Activated CD8-positive, alpha-beta T cell treated with anti-CD3 and anti-CD28 coated beads for 36 hours (primary cell): ENCODE measurements at regions of chr16 and their contacts with region 1.

Region 1: DNA sequence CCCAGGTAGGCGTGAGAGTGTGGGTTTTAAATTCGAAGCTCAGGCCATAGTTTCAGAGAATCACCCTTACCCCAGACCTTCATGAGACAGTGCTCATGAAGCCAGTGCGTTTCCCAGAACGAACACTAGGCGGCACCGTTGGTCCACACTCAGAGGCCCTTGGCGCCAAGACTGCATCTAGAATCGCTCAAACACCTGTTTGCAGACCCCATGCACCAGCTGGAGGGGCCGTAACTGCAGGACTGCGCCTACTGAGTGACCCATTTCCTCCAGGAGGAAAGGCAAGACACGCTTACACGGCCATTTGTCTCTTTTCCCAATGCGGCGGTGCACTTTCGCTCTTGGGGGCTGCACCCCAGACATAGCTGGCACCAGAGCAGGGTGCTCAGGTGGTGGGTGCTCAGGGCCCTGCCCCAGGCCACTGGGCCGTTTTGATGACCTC is 34.0 kb downstream of the ADGRG5 start:
- DNase-seq: peak; percentile 95
- ATAC-seq: peak; percentile 66
- H3K4me3 Mint-ChIP-seq: no peak overlapping the region
- H3K27ac Mint-ChIP-seq: peak overlapping the region; percentile 88
- H3K4me1 Mint-ChIP-seq: peaks cover 48% of the 10 kb centered on the region
- H3K27me3 Mint-ChIP-seq: no peaks in the 10 kb centered on the region
- CTCF ChIP-seq: peak; percentile 98

Region 2: GRCh38 chr16:57452021-57452420 is 124.4 kb before region 1 on chr16:
- CTCF ChIA-PET with region 1: no interaction called
- POLR2A ChIA-PET with region 1: no interaction called
- intact Hi-C with region 1: no loop called
- DNase-seq: no peak
- ATAC-seq: no peak
- H3K4me3 Mint-ChIP-seq: no peak overlapping the region
- H3K27ac Mint-ChIP-seq: no peak overlapping the region
- H3K4me1 Mint-ChIP-seq: peaks cover 19% of the 10 kb centered on the region
- H3K27me3 Mint-ChIP-seq: no peaks in the 10 kb centered on the region
- CTCF ChIP-seq: no peak

Region 3: DNA sequence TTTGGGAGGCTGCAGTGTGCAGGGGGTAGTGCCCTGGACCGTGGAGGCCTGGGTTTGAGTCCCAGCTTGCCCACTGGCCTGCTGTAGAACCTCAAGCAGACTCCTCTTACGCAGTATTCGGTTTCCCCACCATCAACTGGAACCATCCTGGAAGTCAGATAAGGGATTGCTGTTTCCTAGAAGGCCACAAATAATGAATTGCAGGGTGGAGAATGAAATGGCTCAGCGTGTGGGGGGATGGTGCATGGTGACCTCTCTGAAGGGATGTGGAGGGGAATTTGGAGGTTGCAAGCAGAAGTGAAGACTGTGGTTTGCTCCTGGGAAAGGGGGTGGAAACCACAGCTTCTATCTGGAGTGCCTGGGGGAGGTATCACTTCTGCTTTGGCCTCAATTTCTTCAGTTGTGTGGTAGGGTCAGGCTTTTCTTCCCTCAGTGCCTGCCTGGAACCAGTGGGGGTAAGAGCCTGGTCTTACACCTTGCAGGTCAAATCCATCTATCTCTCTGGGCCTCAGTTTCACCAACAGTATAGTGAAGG is 32.3 kb before region 1 on chr16:
- CTCF ChIA-PET with region 1: interaction called, 22 read pairs
- POLR2A ChIA-PET with region 1: interaction called, 3 read pairs
- intact Hi-C with region 1: no loop called
- DNase-seq: peak; percentile 46
- ATAC-seq: peak; percentile 50
- H3K4me3 Mint-ChIP-seq: peak overlapping the region; percentile 66
- H3K27ac Mint-ChIP-seq: peak overlapping the region; percentile 13
- H3K4me1 Mint-ChIP-seq: peaks cover 57% of the 10 kb centered on the region
- H3K27me3 Mint-ChIP-seq: no peaks in the 10 kb centered on the region
- CTCF ChIP-seq: no peak

Region 4: GRCh38 chr16:57591086-57591869 is 14.8 kb after region 1 on chr16:
- CTCF ChIA-PET with region 1: interaction called, 180 read pairs
- POLR2A ChIA-PET with region 1: interaction called, 25 read pairs
- intact Hi-C with region 1: no loop called
- DNase-seq: peak; percentile 94
- ATAC-seq: peak; percentile 81
- H3K4me3 Mint-ChIP-seq: peak overlapping the region; percentile 77
- H3K27ac Mint-ChIP-seq: peak overlapping the region; percentile 98
- H3K4me1 Mint-ChIP-seq: peaks cover 49% of the 10 kb centered on the region
- H3K27me3 Mint-ChIP-seq: no peaks in the 10 kb centered on the region
- CTCF ChIP-seq: peak; percentile 94

Region 5: DNA sequence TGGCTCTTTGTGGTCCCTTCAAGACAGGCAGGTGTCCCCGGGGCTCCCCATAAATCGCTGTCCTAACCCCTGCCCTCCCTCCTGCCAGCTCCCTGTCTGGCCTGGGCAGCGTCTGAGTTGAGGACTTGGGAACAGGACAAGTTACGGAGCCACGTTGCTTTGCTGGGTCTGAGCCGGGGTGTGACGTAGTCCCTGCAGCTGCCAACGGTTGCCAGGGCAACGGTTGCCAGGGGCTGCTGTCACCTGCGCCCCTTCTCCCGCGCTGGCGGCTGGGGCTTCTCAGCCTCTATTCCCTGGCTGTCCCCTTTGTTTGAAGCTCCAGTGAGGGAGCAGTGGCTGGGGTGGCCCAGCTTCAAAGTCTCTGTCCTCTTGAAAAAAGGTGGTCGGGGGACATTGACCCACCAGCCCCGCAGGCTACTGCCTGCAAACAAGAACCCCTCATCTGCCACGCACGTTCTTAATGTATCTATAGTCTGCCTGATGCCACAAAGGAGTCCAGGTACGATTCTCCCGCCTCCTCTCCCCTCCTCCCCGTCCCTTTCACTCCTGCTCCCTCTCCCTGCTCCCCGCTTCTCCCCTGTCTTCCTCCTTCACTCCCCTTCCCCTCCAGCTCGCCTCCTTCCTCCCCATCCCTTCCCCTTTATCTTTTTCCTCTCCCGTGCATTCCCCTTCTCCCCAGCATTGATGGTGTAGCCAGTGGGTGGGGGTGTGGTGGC is 62.9 kb after region 1 on chr16:
- CTCF ChIA-PET with region 1: interaction called, 22 read pairs
- POLR2A ChIA-PET with region 1: interaction called, 4 read pairs
- intact Hi-C with region 1: no loop called
- DNase-seq: peak; percentile 42
- ATAC-seq: peak; percentile 40
- H3K4me3 Mint-ChIP-seq: no peak overlapping the region
- H3K27ac Mint-ChIP-seq: no peak overlapping the region
- H3K4me1 Mint-ChIP-seq: no peaks in the 10 kb centered on the region
- H3K27me3 Mint-ChIP-seq: no peaks in the 10 kb centered on the region
- CTCF ChIP-seq: no peak

Region 6: GRCh38 chr16:57672824-57673223 is 96.4 kb after region 1 on chr16:
- CTCF ChIA-PET with region 1: interaction called, 12 read pairs
- POLR2A ChIA-PET with region 1: no interaction called
- intact Hi-C with region 1: no loop called
- DNase-seq: no peak
- ATAC-seq: no peak
- H3K4me3 Mint-ChIP-seq: no peak overlapping the region
- H3K27ac Mint-ChIP-seq: no peak overlapping the region
- H3K4me1 Mint-ChIP-seq: no peaks in the 10 kb centered on the region
- H3K27me3 Mint-ChIP-seq: no peaks in the 10 kb centered on the region
- CTCF ChIP-seq: no peak

Region 7: GRCh38 chr16:57700781-57701551 is 124.5 kb after region 1 on chr16:
- CTCF ChIA-PET with region 1: no interaction called
- POLR2A ChIA-PET with region 1: no interaction called
- intact Hi-C with region 1: no loop called
- DNase-seq: no peak
- ATAC-seq: no peak
- H3K4me3 Mint-ChIP-seq: no peak overlapping the region
- H3K27ac Mint-ChIP-seq: no peak overlapping the region
- H3K4me1 Mint-ChIP-seq: no peaks in the 10 kb centered on the region
- H3K27me3 Mint-ChIP-seq: no peaks in the 10 kb centered on the region
- CTCF ChIP-seq: no peak

Region 8: DNA sequence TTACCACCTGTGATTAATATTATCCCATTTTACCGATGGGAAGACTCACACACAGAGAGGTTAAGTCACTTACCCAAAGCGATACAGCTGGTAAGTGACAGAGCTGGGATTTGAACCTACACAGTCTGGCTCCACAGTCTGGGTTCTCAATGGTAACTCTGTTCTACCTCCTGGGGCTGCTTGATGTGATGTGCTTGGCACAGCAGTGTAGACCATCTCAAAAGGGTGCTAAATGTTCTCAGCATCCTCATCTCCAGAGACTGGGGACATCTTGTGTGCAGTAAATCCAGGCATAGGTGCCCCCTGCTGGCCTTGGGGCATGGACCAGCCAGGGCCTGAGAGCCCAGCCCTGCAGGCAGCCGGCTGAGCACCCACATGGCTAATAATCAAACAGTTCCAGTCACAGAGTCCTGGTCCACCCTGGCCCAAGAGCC is 143.7 kb after region 1 on chr16:
- CTCF ChIA-PET with region 1: interaction called, 8 read pairs
- POLR2A ChIA-PET with region 1: no interaction called
- intact Hi-C with region 1: loop called (anchors 10 kb)
- DNase-seq: peak; percentile 78
- ATAC-seq: peak; percentile 94
- H3K4me3 Mint-ChIP-seq: no peak overlapping the region
- H3K27ac Mint-ChIP-seq: no peak overlapping the region
- H3K4me1 Mint-ChIP-seq: peaks cover 2% of the 10 kb centered on the region
- H3K27me3 Mint-ChIP-seq: no peaks in the 10 kb centered on the region
- CTCF ChIP-seq: peak; percentile 33

Region 9: DNA sequence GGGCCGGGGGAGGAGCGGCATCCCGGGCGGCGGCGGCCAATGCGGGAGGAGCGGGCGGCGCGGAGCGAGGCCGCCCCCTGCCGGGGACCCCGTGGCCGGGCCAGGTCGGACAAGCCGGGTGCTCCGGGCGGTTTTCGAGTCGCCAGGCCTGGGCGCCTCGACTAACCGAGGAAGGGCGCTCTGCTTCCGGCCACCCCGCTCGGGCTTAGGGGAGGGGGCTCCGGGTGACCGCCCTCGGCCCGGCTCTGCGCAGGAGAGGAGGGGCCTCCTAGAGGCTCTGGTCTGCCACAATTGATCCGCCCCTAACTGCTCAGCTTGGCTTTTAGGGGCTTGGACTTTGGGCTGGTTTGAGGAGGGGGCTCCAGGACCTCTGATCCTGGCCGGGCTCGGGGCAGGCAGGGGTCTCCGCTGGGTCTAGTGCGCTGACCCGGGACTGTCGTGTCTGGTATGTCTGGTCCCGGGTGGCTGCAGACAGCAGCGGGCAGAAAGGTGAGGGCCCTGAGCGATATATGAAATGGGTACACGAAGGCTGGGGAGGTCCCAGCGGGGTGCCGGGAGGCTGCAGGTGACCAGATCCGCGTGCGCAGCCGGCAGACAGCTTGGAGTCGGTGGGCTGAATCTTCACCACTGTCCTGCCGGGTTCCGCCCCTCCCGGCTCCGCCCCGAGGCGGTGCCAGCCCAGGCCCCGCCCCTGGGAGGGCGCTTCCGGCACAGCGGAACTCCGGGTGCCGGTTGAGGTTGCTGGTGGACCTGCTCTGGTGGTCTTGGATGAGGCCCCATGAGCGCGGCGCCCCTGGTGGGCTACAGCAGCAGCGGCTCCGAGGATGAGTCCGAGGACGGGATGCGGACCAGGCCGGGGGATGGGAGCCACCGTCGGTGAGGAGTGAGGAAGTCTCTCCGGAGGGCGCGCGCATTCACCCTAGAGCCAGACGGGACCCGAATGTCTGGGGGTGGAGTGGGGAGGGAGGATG is 424.5 kb after region 1 on chr16 and contains the start of gene USB1:
- CTCF ChIA-PET with region 1: interaction called, 17 read pairs
- POLR2A ChIA-PET with region 1: no interaction called
- intact Hi-C with region 1: no loop called
- DNase-seq: peak; percentile 83
- ATAC-seq: peak; percentile 82
- H3K4me3 Mint-ChIP-seq: peak within 1 kb of the TSS; percentile 90
- H3K27ac Mint-ChIP-seq: peak within 1 kb of the TSS; percentile 89
- H3K4me1 Mint-ChIP-seq: peaks cover 40% of the 10 kb centered on the region
- H3K27me3 Mint-ChIP-seq: no peaks in the 10 kb centered on the region
- CTCF ChIP-seq: peak; percentile 67
- total RNA-seq, gene USB1: 32.9 to 37.5 TPM